ENCODE measurements at regions of chr10 and their contacts with region 1.

Region 1: GRCh38 chr10:34723750-34724149 is 91.3 kb downstream of the PARD3 start:
- DNase-seq: no peak
- ATAC-seq: peak; percentile 77
- H3K4me3 ChIP-seq: no peak overlapping the region
- H3K27ac ChIP-seq: no peak overlapping the region
- H3K4me1 ChIP-seq: no peaks in the 10 kb centered on the region
- H3K27me3 ChIP-seq: no peaks in the 10 kb centered on the region
- CTCF ChIP-seq: peak; percentile 39 to 70 (median 39); a peak in 4 of 6 replicates
- EP300 ChIP-seq: no peak
- POLR2A ChIP-seq: no peak
- RAD21 ChIP-seq: peak; percentile 71

Region 2: DNA sequence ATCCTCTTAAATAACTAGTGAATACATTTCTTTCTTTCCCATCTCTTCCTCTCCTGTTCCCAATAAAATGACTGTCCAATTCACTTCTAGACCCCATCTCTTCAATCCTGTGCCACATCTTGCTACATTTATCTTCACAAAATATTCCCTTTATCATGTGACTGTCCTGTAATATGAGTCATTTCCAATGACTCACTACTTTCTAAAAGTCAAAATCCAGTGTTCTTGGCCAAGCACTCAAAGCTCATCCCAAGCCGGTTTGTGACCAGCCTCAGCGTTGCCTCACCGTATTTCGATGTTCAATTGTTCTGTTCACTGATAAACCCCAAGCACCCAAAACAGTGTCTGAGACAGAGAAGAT is 13.4 kb before region 1 on chr10:
- CTCF ChIA-PET with region 1: interaction called, 20 read pairs
- POLR2A ChIA-PET with region 1: no interaction called
- RAD21 ChIA-PET with region 1: interaction called, 14 read pairs
- SMC1A ChIA-PET with region 1: interaction called, 27 read pairs
- in situ Hi-C with region 1: no loop called
- intact Hi-C with region 1: no loop called
- DNase-seq: no peak
- ATAC-seq: no peak
- H3K4me3 ChIP-seq: no peak overlapping the region
- H3K27ac ChIP-seq: no peak overlapping the region
- H3K4me1 ChIP-seq: no peaks in the 10 kb centered on the region
- H3K27me3 ChIP-seq: 0 out of 4 replicates have a peak, but pooled peaks cover 0 to 3% of the 10 kb centered on the region in 2 experiments
- CTCF ChIP-seq: no peak
- EP300 ChIP-seq: no peak
- POLR2A ChIP-seq: no peak
- RAD21 ChIP-seq: no peak

Region 3: DNA sequence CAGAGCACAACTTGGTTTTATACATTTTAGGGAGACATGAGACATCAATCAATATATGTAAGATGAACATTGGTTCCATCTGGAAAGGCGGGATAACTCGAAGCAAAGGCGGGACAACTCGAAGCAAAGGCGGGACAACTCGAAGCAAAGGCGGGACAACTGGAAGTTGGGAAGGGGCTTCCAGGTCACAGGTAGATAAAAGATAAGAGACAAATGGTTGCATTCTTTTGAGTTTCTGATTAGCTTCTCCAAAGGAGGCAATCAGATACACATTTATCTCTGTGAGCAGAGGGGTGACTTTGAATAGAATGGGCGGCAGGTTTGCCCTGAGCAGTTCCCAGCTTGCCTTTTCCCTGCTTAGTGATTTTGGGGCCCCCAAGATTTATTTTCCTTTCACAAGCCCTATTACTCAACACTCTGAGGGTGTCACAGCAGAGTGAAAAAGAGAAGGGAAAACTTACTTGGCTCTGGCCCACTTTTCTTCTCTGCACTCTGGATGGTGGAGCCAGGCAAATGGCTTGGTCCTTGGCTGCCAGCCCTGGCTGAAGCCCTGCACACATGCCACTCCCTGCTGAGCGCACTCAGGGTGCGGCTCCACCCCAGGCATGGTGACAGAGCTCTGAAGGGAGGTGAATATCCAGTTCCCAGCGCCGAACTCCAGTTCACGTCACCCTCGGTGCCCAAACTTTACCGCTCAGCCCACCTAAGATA is 44.7 kb after region 1 on chr10:
- CTCF ChIA-PET with region 1: interaction called, 8 read pairs
- POLR2A ChIA-PET with region 1: interaction called, 8 read pairs
- RAD21 ChIA-PET with region 1: interaction called, 17 read pairs
- SMC1A ChIA-PET with region 1: interaction called, 18 read pairs
- in situ Hi-C with region 1: no loop called
- intact Hi-C with region 1: no loop called
- DNase-seq: no peak
- ATAC-seq: peak; percentile 11; the same call in 1 of the 3 replicates
- H3K4me3 ChIP-seq: no peak overlapping the region
- H3K27ac ChIP-seq: no peak overlapping the region
- H3K4me1 ChIP-seq: no peaks in the 10 kb centered on the region
- H3K27me3 ChIP-seq: no peaks in the 10 kb centered on the region
- CTCF ChIP-seq: no peak
- EP300 ChIP-seq: no peak
- POLR2A ChIP-seq: no peak
- RAD21 ChIP-seq: no peak

Region 4: DNA sequence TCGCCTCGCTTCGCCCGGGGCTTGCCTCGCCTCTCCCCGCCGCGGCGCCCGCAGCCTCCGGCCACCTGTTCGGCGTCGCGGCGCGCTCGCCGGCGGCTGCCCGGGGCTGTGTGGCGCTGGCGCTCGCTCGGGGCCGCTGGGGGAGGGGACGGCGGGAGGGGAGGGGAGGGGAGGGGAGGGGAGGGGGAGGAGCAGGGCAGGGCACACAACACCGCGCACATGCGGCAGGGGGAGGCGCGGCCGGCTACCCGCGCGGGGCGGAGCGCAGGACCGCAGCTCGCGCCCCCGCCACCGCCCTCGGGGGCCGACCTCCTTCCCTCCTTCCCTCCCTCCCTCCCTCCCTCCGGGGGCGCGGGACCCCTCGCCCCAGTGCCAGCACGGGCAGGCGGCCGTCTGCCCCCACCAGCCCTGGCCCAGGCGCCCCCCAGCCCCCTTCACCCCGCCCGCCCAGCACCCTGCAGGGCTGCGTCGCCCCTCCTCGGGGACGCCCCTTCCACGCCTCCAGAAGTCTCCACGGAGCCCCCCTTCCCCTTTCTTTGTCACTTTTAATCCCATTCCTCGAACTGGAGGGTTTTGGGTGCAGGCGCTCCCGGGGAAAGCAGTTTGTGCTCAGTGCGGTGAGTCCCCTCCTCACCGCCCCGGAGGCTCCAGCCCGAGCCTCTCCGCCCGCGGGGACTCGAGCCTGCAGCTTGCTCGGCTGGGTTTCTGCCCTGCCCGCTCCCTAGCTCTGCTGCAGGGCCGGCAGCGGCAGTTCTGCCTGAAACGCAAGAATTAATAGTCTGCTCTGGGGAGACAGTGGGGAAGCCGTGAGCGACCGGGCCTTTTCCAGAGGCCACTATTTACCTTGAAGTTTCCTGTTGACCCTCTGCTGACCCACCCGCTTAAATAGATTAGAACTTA is 91.7 kb after region 1 on chr10 and contains the start of gene PARD3:
- CTCF ChIA-PET with region 1: interaction called, 26 read pairs
- POLR2A ChIA-PET with region 1: interaction called, 4 read pairs
- RAD21 ChIA-PET with region 1: interaction called, 142 read pairs
- SMC1A ChIA-PET with region 1: interaction called, 107 read pairs
- in situ Hi-C with region 1: no loop called
- intact Hi-C with region 1: loop called (anchors 5 kb)
- DNase-seq: no peak
- ATAC-seq: peak; percentile 70
- H3K4me3 ChIP-seq: peak within 1 kb of the TSS; percentile 41; the same call in 1 of the 2 replicates
- H3K27ac ChIP-seq: no peak within 1 kb of the TSS
- H3K4me1 ChIP-seq: no peaks in the 10 kb centered on the region
- H3K27me3 ChIP-seq: peaks cover 0 to 15% of the 10 kb centered on the region in 2 experiments; a peak in 3 of 4 replicates
- CTCF ChIP-seq: no peak
- EP300 ChIP-seq: no peak
- POLR2A ChIP-seq: no peak
- RAD21 ChIP-seq: no peak
- polyA plus RNA-seq, gene PARD3: 6.3 to 9.6 TPM

Region 5: DNA sequence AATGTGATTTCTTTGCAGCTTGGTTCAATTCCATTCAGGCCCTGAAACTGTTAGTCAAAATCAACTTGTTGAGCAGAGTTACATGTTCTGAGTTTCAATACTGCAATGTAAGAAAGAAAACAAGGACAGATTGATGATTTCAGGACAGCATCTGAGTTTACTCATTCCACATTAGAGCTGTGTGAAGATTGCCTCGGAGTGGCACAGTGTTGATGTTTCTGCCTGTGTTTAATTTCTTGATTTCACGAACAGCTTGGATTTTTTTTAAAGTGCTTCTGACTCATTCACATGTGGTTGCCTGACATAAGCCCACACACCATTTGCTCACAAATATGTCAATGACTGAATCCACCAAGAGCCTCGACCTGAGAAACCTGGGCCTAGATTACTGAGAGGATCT is 192.6 kb after region 1 on chr10:
- CTCF ChIA-PET with region 1: interaction called, 5 read pairs
- POLR2A ChIA-PET with region 1: no interaction called
- RAD21 ChIA-PET with region 1: interaction called, 3 read pairs
- SMC1A ChIA-PET with region 1: interaction called, 13 read pairs
- in situ Hi-C with region 1: no loop called
- intact Hi-C with region 1: no loop called
- DNase-seq: no peak
- ATAC-seq: peak; percentile 77
- H3K4me3 ChIP-seq: no peak overlapping the region
- H3K27ac ChIP-seq: no peak overlapping the region
- H3K4me1 ChIP-seq: no peaks in the 10 kb centered on the region
- H3K27me3 ChIP-seq: no peaks in the 10 kb centered on the region
- CTCF ChIP-seq: no peak
- EP300 ChIP-seq: no peak
- POLR2A ChIP-seq: no peak
- RAD21 ChIP-seq: no peak

Region 6: GRCh38 chr10:34994565-34995142 is 270.9 kb after region 1 on chr10:
- CTCF ChIA-PET with region 1: interaction called, 80 read pairs
- POLR2A ChIA-PET with region 1: no interaction called
- RAD21 ChIA-PET with region 1: interaction called, 42 read pairs
- SMC1A ChIA-PET with region 1: interaction called, 59 read pairs
- in situ Hi-C with region 1: no loop called
- intact Hi-C with region 1: no loop called
- DNase-seq: peak; percentile 38
- ATAC-seq: peak; percentile 92
- H3K4me3 ChIP-seq: no peak overlapping the region
- H3K27ac ChIP-seq: no peak overlapping the region
- H3K4me1 ChIP-seq: peaks cover 4% of the 10 kb centered on the region; the same call in 1 of the 2 replicates
- H3K27me3 ChIP-seq: no peaks in the 10 kb centered on the region
- CTCF ChIP-seq: peak; percentile 62 to 72 (median 69)
- EP300 ChIP-seq: peak in 1 of 2 experiments; percentile 44; a peak in 1 of 4 replicates
- POLR2A ChIP-seq: no peak
- RAD21 ChIP-seq: peak; percentile 66

Region 7: DNA sequence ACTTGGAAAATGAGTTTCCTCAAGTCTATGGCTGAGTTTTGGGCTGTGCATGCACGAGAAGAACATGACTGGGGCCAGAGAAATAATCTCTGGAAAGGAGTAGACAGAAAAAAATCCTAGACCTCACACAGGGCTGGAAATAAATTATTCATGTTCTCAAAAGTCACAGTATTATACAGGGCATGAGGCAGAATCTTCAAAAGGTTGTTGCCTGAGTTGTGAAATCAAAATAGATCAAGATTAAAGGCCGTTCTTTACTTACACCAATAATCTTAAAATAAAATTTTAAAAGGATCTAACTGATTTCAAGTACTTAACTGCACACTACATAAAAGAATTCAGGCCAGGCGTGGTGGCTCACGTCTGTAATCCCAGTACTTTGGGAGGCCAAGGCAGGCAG is 388.8 kb after region 1 on chr10:
- CTCF ChIA-PET with region 1: no interaction called
- POLR2A ChIA-PET with region 1: no interaction called
- RAD21 ChIA-PET with region 1: no interaction called
- SMC1A ChIA-PET with region 1: no interaction called
- in situ Hi-C with region 1: no loop called
- intact Hi-C with region 1: no loop called
- DNase-seq: no peak
- ATAC-seq: no peak
- H3K4me3 ChIP-seq: no peak overlapping the region
- H3K27ac ChIP-seq: no peak overlapping the region
- H3K4me1 ChIP-seq: no peaks in the 10 kb centered on the region
- H3K27me3 ChIP-seq: no peaks in the 10 kb centered on the region
- CTCF ChIP-seq: no peak
- EP300 ChIP-seq: no peak
- POLR2A ChIP-seq: no peak
- RAD21 ChIP-seq: no peak